Activated CD4-positive, alpha-beta memory T cell treated with anti-CD3 and anti-CD28 coated beads, Interleukin-2, amount 10 ng/mL, durations not matched to agents 7 days and 5 days (primary cell): ENCODE measurements at regions of chr13 and their contacts with region 1.

Region 1: DNA sequence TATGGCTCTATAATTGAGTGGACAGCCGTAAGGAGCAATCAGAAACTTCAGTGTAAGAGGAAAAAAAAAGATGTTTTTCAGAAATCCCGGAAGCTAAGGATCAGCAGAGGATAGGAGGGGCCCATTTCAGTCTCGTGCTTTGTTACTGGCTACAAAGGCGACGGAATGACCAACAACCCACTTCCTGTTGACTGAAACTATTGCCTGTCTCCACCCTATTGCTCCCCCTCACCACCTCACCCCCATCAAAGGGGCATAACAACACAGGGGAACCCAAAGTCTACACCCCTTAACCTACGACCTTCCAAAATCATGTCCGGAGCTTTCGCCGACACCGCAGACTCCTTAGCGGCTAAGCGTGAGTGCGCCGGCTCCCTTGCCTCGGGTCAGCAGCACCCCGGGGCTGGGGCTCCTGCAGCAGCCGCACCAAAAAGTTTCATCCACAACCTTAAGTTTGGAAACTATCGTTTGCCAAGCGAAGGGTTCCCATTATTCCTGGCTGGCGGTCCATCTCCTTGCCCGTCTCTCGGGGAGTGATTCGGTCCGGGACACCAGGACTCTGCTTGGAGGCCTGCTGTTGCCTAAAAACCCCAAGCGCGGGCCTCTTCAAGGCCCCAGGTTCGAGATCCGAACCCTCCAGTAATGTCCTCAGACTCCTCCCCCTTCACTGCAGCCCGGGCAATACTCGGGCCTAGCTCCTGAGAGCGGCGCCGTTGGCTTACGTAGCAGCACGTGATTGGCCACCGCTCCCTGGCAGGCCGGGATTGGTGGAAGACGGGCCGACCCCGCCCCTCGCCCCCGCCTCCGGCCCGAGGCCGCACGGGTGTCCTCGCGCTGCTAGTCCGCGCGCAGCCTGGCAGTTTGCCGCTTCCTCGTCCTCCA is at the start of gene TPP2:
- DNase-seq: peak; percentile 99
- H3K4me3 Mint-ChIP-seq: peak within 1 kb of the TSS; percentile 97
- H3K27ac Mint-ChIP-seq: peak within 1 kb of the TSS; percentile 100
- H3K4me1 Mint-ChIP-seq: peaks cover 64% of the 10 kb centered on the region
- H3K27me3 Mint-ChIP-seq: no peaks in the 10 kb centered on the region
- total RNA-seq, gene TPP2: 86.2 to 96.8 TPM

Region 2: GRCh38 chr13:102580552-102581169 is 15.7 kb before region 1 on chr13:
- CTCF ChIA-PET with region 1: interaction called, 10 read pairs
- POLR2A ChIA-PET with region 1: interaction called, 45 read pairs
- DNase-seq: peak; percentile 24
- H3K4me3 Mint-ChIP-seq: no peak overlapping the region
- H3K27ac Mint-ChIP-seq: no peak overlapping the region
- H3K4me1 Mint-ChIP-seq: peaks cover 17% of the 10 kb centered on the region
- H3K27me3 Mint-ChIP-seq: peaks cover 11% of the 10 kb centered on the region

Region 3: DNA sequence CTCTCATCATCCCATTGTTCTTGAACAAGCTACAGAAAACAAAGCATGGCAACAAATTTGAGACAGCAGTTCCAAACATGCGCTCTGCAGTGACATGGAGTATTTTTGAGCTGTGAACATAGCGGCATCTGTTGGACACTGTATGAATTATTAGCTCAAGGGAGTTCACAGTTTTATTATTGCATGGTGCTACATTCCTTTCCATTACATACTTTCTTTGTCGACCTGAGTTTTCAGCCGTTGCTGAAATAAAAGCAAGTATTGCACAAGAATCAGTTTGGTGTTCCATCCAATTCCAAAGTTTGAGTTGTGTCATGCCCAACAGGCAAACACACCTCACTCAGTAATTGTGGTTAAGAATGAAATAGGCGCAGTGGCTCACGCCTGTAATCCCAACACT is 128.5 kb after region 1 on chr13:
- CTCF ChIA-PET with region 1: interaction called, 16 read pairs
- POLR2A ChIA-PET with region 1: interaction called, 3 read pairs
- DNase-seq: no peak
- H3K4me3 Mint-ChIP-seq: no peak overlapping the region
- H3K27ac Mint-ChIP-seq: no peak overlapping the region
- H3K4me1 Mint-ChIP-seq: peaks cover 6% of the 10 kb centered on the region
- H3K27me3 Mint-ChIP-seq: peaks cover 15% of the 10 kb centered on the region

Region 4: DNA sequence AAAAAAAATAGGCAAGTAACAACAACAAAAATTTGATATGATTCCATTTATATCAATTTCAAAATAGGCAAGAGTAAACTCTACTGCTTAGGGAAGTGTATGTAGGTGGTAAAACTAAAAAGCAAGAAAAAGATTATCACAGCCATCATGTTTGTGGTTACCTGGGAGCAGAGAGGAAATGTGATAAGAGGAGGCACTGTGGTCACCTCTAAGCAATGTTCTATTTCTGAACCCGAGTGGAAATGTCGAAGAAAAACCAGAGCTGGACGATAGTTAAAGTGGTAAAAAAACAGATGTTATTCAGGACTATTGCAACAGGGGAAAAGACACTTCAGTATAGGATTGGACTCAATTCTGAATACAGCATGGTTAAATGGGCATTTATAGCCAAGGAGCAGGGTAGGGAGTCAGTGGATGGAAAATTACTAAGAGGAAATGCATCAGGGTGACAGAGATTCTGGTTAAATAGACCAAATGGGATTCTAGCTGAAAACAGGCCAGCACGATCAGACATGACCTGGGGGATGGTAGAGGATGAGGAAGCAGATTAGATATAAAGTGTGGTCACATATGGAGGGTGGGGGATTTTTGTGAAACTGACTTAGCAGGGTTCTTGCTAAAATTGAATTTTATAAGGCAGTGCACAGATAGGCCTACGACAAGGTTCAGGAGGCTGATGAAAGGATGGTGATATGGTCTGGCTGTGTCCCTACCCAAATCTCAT is 183.2 kb after region 1 on chr13:
- CTCF ChIA-PET with region 1: interaction called, 16 read pairs
- POLR2A ChIA-PET with region 1: interaction called, 83 read pairs
- DNase-seq: peak; percentile 39
- H3K4me3 Mint-ChIP-seq: peak overlapping the region; percentile 56
- H3K27ac Mint-ChIP-seq: peak overlapping the region; percentile 98
- H3K4me1 Mint-ChIP-seq: peaks cover 45% of the 10 kb centered on the region
- H3K27me3 Mint-ChIP-seq: no peaks in the 10 kb centered on the region

Region 5: GRCh38 chr13:102845630-102846260 is 249.4 kb after region 1 on chr13 and contains the start of gene ERCC5:
- CTCF ChIA-PET with region 1: interaction called, 113 read pairs
- POLR2A ChIA-PET with region 1: interaction called, 342 read pairs
- DNase-seq: peak; percentile 96
- H3K4me3 Mint-ChIP-seq: peak within 1 kb of the TSS; percentile 99
- H3K27ac Mint-ChIP-seq: peak within 1 kb of the TSS; percentile 98
- H3K4me1 Mint-ChIP-seq: peaks cover 41% of the 10 kb centered on the region
- H3K27me3 Mint-ChIP-seq: no peaks in the 10 kb centered on the region
- total RNA-seq, gene ERCC5: 82.3 to 89.9 TPM